GM10248 (cell line): ENCODE measurements at regions of chr7 and their contacts with region 1.

Region 1: DNA sequence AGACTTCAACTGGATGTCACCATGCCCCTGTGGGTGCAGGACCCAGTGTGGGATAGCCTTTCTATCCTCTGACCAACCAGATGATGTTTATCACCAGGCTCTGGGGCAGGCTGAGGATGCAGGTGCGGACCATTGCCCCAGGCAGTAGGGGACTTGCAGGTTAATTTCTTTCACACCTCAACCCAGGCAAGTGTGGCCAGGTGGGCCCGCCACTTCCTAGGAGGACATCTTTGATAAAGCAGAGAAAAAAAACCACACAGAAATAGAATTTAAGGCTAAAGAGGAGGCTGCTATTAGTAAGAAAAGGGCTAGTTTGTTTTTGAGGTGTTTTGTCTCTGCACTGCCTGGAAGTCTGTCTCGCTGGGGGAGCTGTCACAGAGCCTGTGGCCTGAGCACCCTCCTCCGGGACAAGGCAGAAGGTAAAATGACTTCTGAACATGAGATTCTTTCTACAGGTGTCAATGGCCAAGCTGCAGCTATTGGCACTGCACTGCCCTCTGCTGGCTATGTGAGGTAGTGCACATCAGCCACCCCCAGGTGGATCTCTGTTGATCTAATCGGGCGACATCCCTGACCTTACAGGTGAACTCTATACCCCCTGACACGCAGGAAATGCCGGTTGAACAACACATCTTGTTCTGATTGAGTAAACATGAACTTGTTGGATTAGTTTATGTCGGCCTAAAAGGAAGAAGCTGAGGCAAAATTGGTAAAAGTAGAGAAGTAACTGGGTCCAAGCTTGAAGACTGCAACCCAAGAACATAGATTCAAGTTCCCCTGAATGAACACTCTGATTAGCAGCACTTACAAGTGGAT is 21.0 kb downstream of the UPP1 start:
- DNase-seq: peak; percentile 82
- CTCF ChIP-seq: peak; percentile 98

Region 2: DNA sequence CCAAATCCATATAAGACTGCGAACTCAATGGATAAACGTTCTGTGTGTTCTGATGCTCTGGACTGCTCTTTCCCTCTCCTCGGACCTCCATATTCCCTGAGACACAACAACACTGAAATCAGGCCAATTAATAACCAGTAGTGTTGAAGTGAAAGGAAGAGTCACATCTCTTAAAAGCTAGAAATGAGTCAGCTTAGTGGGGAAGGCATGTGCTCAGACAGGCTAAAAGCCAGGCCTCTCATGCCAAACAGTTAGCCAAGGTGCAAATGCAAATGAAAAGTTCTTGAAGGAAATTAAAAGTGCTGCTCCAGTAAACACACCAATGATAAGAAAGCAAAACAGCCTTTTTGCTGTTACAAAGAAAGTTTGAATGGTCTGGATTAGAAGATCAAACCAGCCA is 557.4 kb before region 1 on chr7:
- CTCF ChIA-PET with region 1: no interaction called
- POLR2A ChIA-PET with region 1: no interaction called
- DNase-seq: peak; percentile 70
- CTCF ChIP-seq: no peak

Region 3: GRCh38 chr7:47937065-47937683 is 172.9 kb before region 1 on chr7:
- CTCF ChIA-PET with region 1: interaction called, 19 read pairs
- POLR2A ChIA-PET with region 1: no interaction called
- DNase-seq: peak; percentile 90
- CTCF ChIP-seq: no peak

Region 4: DNA sequence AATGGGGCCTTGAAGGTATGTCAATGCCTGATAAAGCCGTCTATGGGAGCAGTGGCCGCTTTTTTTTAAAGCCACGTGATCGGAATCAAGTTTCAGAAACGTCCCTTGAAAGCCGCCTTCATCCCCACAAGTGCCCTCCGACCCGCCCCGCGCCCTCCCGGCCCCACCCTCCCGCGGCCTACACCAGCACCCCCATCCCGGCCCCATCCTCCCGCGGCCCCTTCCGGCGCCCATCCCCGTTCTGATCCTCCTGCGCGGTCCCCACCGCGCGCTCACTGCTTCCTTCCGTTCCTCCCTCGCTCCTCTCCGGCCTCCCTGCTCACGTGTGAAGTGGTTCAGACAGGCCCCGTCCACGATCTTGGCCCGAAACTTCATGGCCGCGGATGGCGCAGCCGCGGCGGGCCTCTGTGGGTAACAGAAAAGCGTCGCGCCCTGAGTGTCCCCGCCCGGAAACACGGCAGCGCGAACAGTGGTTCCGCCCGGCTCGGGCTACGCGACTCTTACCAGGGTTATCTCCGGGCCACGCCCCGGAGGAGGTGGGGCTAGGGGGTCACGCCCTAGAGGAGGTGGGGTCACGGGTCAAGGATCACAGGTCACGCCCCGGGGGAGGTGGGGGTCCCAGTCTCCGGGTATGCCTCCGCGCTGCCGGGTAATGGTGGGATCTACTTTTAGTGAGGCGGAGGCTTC is 130.8 kb before region 1 on chr7 and contains the start of gene HUS1:
- CTCF ChIA-PET with region 1: interaction called, 10 read pairs
- POLR2A ChIA-PET with region 1: no interaction called
- DNase-seq: peak; percentile 93
- CTCF ChIP-seq: no peak

Region 5: GRCh38 chr7:48088559-48089045 is 21.5 kb before region 1 on chr7:
- CTCF ChIA-PET with region 1: interaction called, 11 read pairs
- POLR2A ChIA-PET with region 1: interaction called, 4 read pairs
- DNase-seq: peak; percentile 45
- CTCF ChIP-seq: no peak

Region 6: DNA sequence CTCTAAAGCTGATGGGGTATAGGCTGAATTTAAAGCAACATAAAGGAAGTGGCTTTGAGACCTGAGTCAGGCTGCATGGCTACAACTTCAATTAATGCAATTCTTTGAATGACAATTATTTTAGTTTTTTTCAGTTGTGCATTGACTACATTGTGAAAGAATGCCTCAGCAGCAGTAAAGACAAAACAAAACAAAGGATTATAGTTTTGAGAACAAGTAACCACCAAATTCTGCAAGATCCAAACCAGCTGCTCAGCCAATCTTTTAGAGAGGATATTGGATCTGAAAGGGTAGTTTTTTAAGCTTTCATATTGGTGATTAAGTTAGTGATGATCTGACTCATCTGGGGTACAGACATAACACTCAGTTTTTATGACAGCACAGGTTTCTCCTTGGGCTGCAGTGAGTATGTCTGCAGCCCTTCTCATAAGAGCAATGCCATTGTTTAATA is 20.6 kb after region 1 on chr7:
- CTCF ChIA-PET with region 1: interaction called, 13 read pairs
- POLR2A ChIA-PET with region 1: no interaction called
- DNase-seq: no peak
- CTCF ChIP-seq: no peak

Region 7: GRCh38 chr7:48237354-48237753 is 127.3 kb after region 1 on chr7:
- CTCF ChIA-PET with region 1: no interaction called
- POLR2A ChIA-PET with region 1: no interaction called
- DNase-seq: no peak
- CTCF ChIP-seq: no peak